Transverse colon (tissue), 4 donors: ENCODE measurements at regions of chr7 and their contacts with region 1.

Region 1: DNA sequence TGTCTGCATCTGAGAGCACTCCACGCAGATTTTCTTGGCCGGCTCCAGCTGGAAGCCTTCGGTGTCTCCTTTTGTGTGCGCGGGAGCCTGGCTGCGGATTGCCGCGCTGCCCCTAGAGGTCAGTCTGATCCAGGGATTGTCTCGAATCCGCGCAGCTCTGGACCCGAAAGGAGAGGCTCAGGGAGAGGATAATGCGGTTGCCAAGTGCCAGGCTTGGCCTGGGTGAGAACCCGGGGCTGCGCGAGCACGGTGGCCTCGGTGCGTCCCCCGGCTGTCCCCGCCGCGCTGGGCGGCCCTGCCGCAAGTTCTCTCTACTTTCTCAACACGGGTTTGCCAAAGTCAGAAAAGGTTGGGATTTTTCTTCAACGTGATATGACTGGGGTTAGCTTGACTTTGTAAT is 140.9 kb downstream of the ADCYAP1R1 start:
- DNase-seq: peak; percentile 31
- H3K4me3 ChIP-seq: no peak overlapping the region
- H3K27ac ChIP-seq: no peak overlapping the region
- H3K4me1 ChIP-seq: peaks cover 0 to 3% (median 0%) of the 10 kb centered on the region in 4 donors
- H3K27me3 ChIP-seq: peaks cover 13% of the 10 kb centered on the region
- CTCF ChIP-seq: peak; percentile 47 to 58 (median 52)
- EP300 ChIP-seq: no peak
- POLR2A ChIP-seq: no peak

Region 2: GRCh38 chr7:30133736-30134610 is 1059.0 kb before region 1 on chr7:
- in situ Hi-C with region 1: no loop called
- intact Hi-C with region 1: no loop called
- DNase-seq: no peak
- H3K4me3 ChIP-seq: peak overlapping the region; percentile 40 to 98 (median 77)
- H3K27ac ChIP-seq: peak overlapping the region; percentile 92 to 95 (median 93)
- H3K4me1 ChIP-seq: peaks cover 4 to 17% (median 8%) of the 10 kb centered on the region in 4 donors
- H3K27me3 ChIP-seq: no peaks in the 10 kb centered on the region
- CTCF ChIP-seq: peak in 1 of 5 experiments; percentile 9
- EP300 ChIP-seq: no peak
- POLR2A ChIP-seq: no peak

Region 3: GRCh38 chr7:31488562-31489203 is 295.7 kb after region 1 on chr7:
- in situ Hi-C with region 1: loop called in 1 of 4 experiments (anchors 25 kb)
- intact Hi-C with region 1: no loop called
- DNase-seq: peak; percentile 56
- H3K4me3 ChIP-seq: no peak overlapping the region
- H3K27ac ChIP-seq: no peak overlapping the region
- H3K4me1 ChIP-seq: peaks cover 0 to under 1% (median 0%) of the 10 kb centered on the region in 4 donors
- H3K27me3 ChIP-seq: no peaks in the 10 kb centered on the region
- CTCF ChIP-seq: peak; percentile 48 to 70 (median 56)
- EP300 ChIP-seq: no peak
- POLR2A ChIP-seq: no peak